Common myeloid progenitor, CD34-positive (primary cell): ENCODE measurements at regions of chr7 and their contacts with region 1.

Region 1: DNA sequence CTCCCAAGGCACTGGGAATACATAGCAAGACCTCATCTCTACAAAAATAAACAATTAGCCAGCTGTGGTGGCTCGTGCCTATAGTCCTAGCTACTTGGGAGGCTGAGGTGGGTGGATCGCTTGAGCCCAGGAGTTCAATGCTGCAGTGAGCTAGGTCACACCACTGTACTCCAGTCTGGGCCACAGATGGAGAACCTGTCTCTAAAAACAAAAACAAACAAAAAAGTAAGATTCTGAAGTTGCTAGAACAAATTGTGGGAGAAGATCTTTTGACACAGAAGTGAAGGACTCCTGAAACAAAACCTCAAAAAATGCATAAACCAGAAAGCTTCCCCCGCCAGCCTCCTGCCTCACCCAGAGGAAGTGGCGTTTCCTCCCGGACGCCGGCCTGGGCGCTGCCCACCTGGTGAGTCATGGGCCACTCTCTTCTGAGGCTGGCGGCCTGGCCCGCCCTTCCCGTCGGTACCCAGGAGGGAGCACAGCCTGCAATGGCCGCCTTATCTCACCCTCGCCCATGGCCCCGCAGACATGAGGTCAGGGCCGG is 25.4 kb upstream of the ELN start:
- DNase-seq: peak; percentile 73 to 90 (median 86)
- H3K4me3 ChIP-seq: peak overlapping the region in 4 of 7 experiments; percentile 3 to 36 (median 26)
- H3K27ac ChIP-seq: peak overlapping the region in 1 of 2 experiments; percentile 51
- H3K4me1 ChIP-seq: peaks cover 9 to 36% (median 33%) of the 10 kb centered on the region in 4 experiments
- H3K27me3 ChIP-seq: no peaks in the 10 kb centered on the region

Region 2: DNA sequence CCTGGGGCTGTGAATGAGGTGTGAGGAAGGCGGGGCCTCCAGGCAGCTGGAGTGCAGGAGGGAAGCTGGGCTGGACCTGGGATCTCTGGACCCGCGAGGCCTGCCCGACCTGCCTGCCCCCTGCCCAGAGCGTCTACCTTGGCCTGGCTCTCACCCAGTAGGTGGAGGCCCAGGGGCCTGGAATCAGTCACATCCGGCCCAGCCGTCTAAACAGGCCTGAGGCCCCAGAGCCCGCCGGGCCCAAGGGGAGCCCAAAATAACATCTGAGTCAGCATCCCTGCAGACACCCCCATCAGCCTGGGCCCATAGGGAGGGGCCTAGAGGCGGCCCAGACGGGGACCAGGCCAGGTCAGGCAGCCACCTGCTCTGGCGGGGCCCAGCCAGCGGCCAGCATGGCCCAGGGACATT is 10.3 kb after region 1 on chr7:
- CTCF ChIA-PET with region 1: interaction called, 18 read pairs
- POLR2A ChIA-PET with region 1: interaction called, 5 read pairs
- DNase-seq: peak; percentile 56 to 90 (median 88)
- H3K4me3 ChIP-seq: peak overlapping the region in 2 of 7 experiments; percentile 16 to 36
- H3K27ac ChIP-seq: no peak overlapping the region
- H3K4me1 ChIP-seq: peaks cover 0 to 44% (median 37%) of the 10 kb centered on the region in 4 experiments
- H3K27me3 ChIP-seq: no peaks in the 10 kb centered on the region